Activated B cell treated with CpG ODN at 0.5 μM for 24 hours (primary cell): ENCODE measurements at regions of chr9 and their contacts with region 1.

Region 1: DNA sequence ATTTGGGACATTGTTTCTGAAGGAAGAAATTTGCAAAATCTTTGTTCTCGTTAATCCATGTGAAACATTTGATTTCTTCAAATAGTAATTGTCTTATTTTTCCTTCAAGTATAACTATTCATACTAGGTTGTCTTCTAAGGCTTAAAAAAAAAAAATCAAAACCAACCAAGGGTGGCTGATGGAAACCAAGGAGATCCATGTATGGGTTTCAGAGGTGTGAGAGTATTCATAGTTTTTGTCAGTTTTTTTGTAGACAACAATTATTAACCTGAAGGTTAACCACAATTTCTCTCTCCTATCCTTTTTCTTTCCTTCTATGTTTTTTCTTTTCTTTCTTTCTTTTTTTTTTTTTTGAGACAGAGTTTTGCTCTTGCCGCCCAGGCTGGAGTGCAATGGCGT is 35.4 kb downstream of the KDM4C start:
- DNase-seq: no peak
- ATAC-seq: no peak
- H3K4me3 Mint-ChIP-seq: no peak overlapping the region
- H3K27ac Mint-ChIP-seq: no peak overlapping the region
- H3K4me1 Mint-ChIP-seq: peaks cover 22% of the 10 kb centered on the region
- H3K27me3 Mint-ChIP-seq: no peaks in the 10 kb centered on the region
- CTCF ChIP-seq: no peak

Region 2: DNA sequence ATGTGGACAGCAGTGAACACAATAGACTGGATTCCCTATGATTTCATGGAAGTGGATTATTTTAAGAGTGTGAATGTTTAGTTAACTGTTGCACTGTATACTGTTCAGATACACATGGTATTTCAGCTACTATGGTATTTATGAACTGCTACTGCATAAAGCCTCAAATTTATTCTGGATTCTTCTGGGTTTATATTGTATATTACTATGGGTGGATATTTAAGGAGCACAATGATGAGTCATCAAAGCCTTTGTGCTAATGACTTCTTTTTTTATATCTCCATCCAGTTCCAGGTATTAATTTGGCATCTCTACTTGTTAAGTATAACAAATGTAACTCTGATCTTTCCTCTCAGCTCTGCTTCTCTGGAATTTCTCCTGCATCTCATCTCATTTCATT is 28.7 kb before region 1 on chr9:
- CTCF ChIA-PET with region 1: no interaction called
- POLR2A ChIA-PET with region 1: interaction called, 3 read pairs
- intact Hi-C with region 1: loop called (anchors 5 kb)
- DNase-seq: no peak
- ATAC-seq: no peak
- H3K4me3 Mint-ChIP-seq: peak overlapping the region; percentile 1
- H3K27ac Mint-ChIP-seq: peak overlapping the region; percentile 3
- H3K4me1 Mint-ChIP-seq: peaks cover 80% of the 10 kb centered on the region
- H3K27me3 Mint-ChIP-seq: no peaks in the 10 kb centered on the region
- CTCF ChIP-seq: no peak